Gastrocnemius medialis (tissue), 4 donors: ENCODE measurements at regions of chr11 and their contacts with region 1.

Region 1: DNA sequence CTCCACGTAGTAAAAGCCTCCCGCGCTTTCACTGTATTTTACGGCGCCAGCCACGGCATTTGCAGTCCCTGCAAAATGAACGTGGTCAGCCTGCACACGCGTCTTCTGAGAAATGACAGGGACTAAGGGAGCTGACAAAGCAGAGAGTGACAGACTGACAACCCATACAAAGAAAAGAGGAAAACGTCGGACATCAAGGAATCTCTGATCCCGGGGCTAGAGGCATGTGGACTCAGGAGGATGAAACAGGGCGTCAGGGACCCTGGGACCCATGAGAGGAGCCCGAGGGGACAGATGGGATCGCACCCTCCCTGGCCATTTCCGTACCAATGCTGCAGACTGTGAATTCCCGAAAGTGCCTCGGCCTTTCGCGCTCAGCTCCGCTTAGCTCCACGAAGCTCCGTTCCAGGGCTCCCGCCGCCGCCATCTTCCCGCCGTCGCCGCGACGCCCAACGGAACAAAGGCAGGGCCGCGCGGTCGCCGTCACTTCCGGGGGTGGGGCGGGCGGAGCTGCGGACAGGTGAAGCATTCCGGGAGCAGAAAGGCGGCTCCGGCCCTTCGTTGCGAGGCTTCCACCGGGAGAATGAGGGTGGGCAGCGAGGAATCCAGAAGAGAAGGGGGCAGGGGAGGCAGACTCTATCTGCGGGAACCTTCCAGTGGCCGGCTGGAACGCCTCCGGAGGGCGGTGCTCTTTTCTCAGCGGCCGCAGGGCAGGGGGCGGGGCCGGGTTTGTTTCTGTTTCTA is at the start of gene NUP160:
- DNase-seq: peak; percentile 65 to 72
- ATAC-seq: peak; percentile 76 to 78
- H3K4me3 ChIP-seq: peak within 1 kb of the TSS; percentile 74 to 98 (median 92)
- H3K27ac ChIP-seq: peak within 1 kb of the TSS; percentile 91 to 94 (median 92)
- H3K4me1 ChIP-seq: peaks cover 38 to 42% of the 10 kb centered on the region in 2 donors
- H3K27me3 ChIP-seq: no peaks in the 10 kb centered on the region
- CTCF ChIP-seq: peak in 1 of 5 experiments; percentile 15
- POLR2A ChIP-seq: peak; percentile 64 to 65
- total RNA-seq, gene NUP160: 8.1 to 11.4 (median 9.9) TPM

Region 2: GRCh38 chr11:47578524-47579460 is 269.3 kb before region 1 on chr11 and contains the starts of genes KBTBD4 and NDUFS3:
- in situ Hi-C with region 1: no loop called
- intact Hi-C with region 1: loop called (anchors 5 kb)
- DNase-seq: peak; percentile 83 to 84
- ATAC-seq: peak; percentile 96 to 98
- H3K4me3 ChIP-seq: peak within 1 kb of the TSS; percentile 79 to 98 (median 82)
- H3K27ac ChIP-seq: peak within 1 kb of the TSS; percentile 89 to 94 (median 91)
- H3K4me1 ChIP-seq: peaks cover 28 to 33% of the 10 kb centered on the region in 2 donors
- H3K27me3 ChIP-seq: no peaks in the 10 kb centered on the region
- CTCF ChIP-seq: no peak
- POLR2A ChIP-seq: peak; percentile 52 to 53
- total RNA-seq, gene KBTBD4: 25.0 to 35.6 (median 30.4) TPM
- total RNA-seq, gene NDUFS3: 143 to 240 (median 194) TPM

Region 3: DNA sequence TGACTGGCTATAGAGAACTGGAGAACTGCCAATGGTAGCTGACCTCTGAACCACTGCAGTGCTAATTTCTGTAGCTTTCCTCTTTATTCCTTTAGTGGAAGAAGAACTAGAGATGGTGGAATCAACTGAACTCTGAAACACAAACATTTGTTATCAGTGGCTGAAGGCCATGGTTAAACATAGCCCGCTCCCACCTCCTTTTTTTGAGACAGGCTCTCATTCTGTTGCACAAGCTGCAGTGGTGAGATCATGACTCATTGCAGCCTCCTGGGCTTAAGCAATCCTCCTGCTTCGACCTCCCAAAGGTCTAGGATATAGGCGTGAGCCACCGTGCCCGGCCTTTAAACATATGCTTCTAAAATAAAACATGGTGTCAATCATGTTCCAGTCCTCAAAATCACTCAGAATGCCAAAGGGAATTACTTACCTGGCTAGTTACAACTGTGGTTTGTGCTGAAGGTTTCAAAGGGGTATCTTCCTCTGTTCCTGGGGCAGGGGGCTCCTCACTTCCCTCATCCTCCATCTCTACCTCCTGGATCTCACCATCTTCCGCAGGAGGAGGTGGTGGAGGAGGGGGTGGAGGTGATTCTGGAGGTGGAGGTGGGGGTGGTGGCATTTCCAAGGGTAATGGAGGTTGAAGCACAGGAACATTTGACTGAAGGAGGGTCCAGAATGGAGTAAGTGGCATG is 123.9 kb before region 1 on chr11:
- in situ Hi-C with region 1: no loop called
- intact Hi-C with region 1: loop called (anchors 5 kb)
- DNase-seq: peak; percentile 14 to 57
- ATAC-seq: peak; percentile 67 to 95
- H3K4me3 ChIP-seq: no peak overlapping the region
- H3K27ac ChIP-seq: peak overlapping the region; percentile 70 to 72 (median 72)
- H3K4me1 ChIP-seq: peaks cover 10 to 15% of the 10 kb centered on the region in 2 donors
- H3K27me3 ChIP-seq: no peaks in the 10 kb centered on the region
- CTCF ChIP-seq: no peak
- POLR2A ChIP-seq: no peak

Region 4: DNA sequence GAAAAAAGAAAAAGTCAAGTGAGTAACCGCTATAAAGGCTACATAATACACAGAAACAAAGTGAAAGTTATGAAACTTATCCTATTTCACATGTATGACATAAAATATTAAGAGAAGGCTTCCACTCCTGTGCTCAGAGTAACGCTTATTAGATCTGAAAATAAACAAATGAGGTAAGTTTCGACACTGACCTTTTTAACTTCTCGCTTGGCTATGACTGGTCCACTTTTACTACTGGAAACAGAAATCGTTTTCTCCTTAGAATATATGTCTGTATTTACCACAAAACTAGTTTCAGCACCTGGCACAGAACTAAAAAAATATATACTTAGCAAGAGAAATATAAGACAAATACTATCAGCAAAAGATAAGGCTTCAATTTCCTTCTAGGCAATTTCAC is 97.3 kb before region 1 on chr11:
- in situ Hi-C with region 1: no loop called
- intact Hi-C with region 1: no loop called
- DNase-seq: no peak
- ATAC-seq: no peak
- H3K4me3 ChIP-seq: no peak overlapping the region
- H3K27ac ChIP-seq: no peak overlapping the region
- H3K4me1 ChIP-seq: no peaks in the 10 kb centered on the region
- H3K27me3 ChIP-seq: no peaks in the 10 kb centered on the region
- CTCF ChIP-seq: no peak
- POLR2A ChIP-seq: no peak

Region 5: GRCh38 chr11:47786373-47786772 is 61.7 kb before region 1 on chr11:
- in situ Hi-C with region 1: no loop called
- intact Hi-C with region 1: loop called (anchors 5 kb)
- DNase-seq: peak; percentile 57 to 85
- ATAC-seq: peak; percentile 63 to 79
- H3K4me3 ChIP-seq: no peak overlapping the region
- H3K27ac ChIP-seq: peak overlapping the region; percentile 58 to 89 (median 86)
- H3K4me1 ChIP-seq: peaks cover 20 to 37% of the 10 kb centered on the region in 2 donors
- H3K27me3 ChIP-seq: no peaks in the 10 kb centered on the region
- CTCF ChIP-seq: peak in 1 of 5 experiments; percentile 10
- POLR2A ChIP-seq: no peak

Region 6: GRCh38 chr11:48129697-48130395 is 281.8 kb after region 1 on chr11:
- in situ Hi-C with region 1: no loop called
- intact Hi-C with region 1: no loop called
- DNase-seq: no peak
- ATAC-seq: no peak
- H3K4me3 ChIP-seq: no peak overlapping the region
- H3K27ac ChIP-seq: no peak overlapping the region
- H3K4me1 ChIP-seq: no peaks in the 10 kb centered on the region
- H3K27me3 ChIP-seq: no peaks in the 10 kb centered on the region
- CTCF ChIP-seq: no peak
- POLR2A ChIP-seq: no peak